H1 (cell line): ENCODE measurements at regions of chr11 and their contacts with region 1.

Region 1: DNA sequence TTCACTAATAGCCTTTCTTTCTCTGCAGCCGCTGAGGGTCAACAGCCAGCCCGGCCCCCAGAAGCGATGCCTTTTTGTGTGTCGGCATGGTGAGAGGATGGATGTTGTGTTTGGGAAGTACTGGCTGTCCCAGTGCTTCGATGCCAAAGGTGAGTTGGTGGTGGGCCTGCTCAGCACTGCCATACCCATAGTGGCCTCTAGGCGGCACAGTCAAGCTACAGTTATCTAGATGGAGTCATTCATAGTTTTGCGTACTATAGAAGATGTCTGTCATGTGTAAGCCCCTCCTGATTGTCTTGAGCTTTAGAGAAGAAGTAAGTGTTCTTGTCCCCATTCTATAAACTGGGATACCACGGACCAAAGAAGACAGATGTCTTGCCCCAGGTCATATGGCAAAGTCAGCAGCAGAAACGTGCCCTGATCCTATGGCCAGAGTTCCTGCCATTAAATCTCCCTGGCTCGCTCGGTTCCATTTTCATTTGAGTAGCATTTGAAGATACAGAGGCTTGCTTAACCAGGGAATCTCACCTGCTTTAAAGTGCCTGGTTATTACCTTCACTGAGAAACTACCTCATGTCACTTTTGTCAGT is 42.1 kb upstream of the CRTAM start:
- DNase-seq: peak in 1 of 2 experiments; percentile 92
- H3K4me3 ChIP-seq: no peak overlapping the region
- H3K27ac ChIP-seq: no peak overlapping the region
- H3K4me1 ChIP-seq: no peaks in the 10 kb centered on the region
- H3K27me3 ChIP-seq: no peaks in the 10 kb centered on the region
- CTCF ChIP-seq: peak; percentile 80 to 97 (median 89)
- EP300 ChIP-seq: no peak
- POLR2A ChIP-seq: no peak
- RAD21 ChIP-seq: peak; percentile 83 to 85

Region 2: GRCh38 chr11:122468965-122469364 is 327.3 kb before region 1 on chr11:
- CTCF ChIA-PET with region 1: no interaction called
- POLR2A ChIA-PET with region 1: no interaction called
- DNase-seq: no peak
- H3K4me3 ChIP-seq: no peak overlapping the region
- H3K27ac ChIP-seq: no peak overlapping the region
- H3K4me1 ChIP-seq: no peaks in the 10 kb centered on the region
- H3K27me3 ChIP-seq: no peaks in the 10 kb centered on the region
- CTCF ChIP-seq: no peak
- EP300 ChIP-seq: no peak
- POLR2A ChIP-seq: no peak
- RAD21 ChIP-seq: no peak

Region 3: DNA sequence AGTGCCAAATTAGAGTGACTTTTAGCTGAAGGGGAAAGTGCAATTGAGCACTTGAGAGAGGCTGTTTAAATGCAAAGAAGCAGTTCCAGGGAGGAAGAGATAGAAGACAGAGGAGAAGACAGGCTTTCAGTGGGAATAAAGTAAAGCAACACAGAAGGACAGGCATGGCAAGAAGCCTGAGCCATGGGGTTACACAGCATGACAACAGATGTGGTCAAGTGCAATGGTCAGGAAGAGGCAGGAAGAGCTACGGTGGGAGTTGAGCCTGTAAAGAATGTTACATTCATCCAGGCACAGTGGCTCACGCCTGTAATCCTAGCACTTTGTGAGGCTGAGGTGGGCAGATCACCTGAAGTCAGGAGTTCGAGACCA is 57.9 kb before region 1 on chr11:
- CTCF ChIA-PET with region 1: no interaction called
- POLR2A ChIA-PET with region 1: no interaction called
- DNase-seq: no peak
- H3K4me3 ChIP-seq: no peak overlapping the region
- H3K27ac ChIP-seq: no peak overlapping the region
- H3K4me1 ChIP-seq: 0 out of 7 replicates have a peak, but pooled peaks cover 0 to 4% (median 0%) of the 10 kb centered on the region in 4 experiments
- H3K27me3 ChIP-seq: no peaks in the 10 kb centered on the region
- CTCF ChIP-seq: no peak
- EP300 ChIP-seq: no peak
- POLR2A ChIP-seq: no peak
- RAD21 ChIP-seq: no peak

Region 4: DNA sequence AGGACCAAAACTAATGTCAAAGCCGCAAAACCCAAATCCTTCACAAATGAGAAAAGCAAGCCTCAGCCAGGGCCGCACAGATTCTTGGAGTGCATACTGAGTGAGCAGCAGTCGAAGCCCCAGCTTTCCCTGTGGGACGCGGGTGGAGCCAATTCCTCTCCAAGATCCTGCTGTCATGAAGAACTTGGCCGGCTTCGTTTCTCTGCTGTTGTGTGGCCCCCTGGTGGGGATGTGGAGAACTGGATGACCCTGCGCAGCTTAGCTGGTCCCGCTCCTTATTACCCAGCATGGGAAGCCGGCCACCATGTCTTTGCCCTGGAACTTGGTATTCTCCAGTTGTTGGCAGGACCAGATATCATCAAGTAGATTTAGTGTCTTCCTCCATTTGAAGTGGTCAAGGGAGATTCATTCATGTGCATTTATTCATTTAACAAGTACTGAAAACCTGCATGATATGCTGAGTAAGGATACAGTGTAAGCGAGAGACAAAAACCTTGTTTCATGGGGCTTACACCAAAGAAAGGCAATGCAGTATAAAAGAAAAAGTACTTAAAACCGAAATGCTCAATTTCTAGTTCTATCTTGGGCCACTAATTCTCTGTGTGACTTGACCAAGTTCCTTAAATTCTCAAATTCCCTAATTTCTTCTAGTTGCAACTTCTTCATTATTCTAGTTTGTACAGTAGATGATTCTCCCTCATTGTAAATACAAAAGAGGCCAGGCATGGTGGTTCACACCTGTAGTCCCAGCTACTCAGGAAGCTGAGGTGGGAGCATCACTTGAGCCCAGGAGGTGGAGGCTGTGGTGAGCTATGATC is 14.6 kb before region 1 on chr11:
- CTCF ChIA-PET with region 1: interaction called, 76 read pairs
- POLR2A ChIA-PET with region 1: interaction called, 3 read pairs
- DNase-seq: peak; percentile 77 to 95
- H3K4me3 ChIP-seq: no peak overlapping the region
- H3K27ac ChIP-seq: no peak overlapping the region
- H3K4me1 ChIP-seq: peaks cover 0 to 2% (median 0%) of the 10 kb centered on the region in 4 experiments; a peak in 4 of 7 replicates
- H3K27me3 ChIP-seq: no peaks in the 10 kb centered on the region
- CTCF ChIP-seq: peak; percentile 81 to 95 (median 93)
- EP300 ChIP-seq: no peak
- POLR2A ChIP-seq: no peak
- RAD21 ChIP-seq: peak; percentile 89 to 94

Region 5: DNA sequence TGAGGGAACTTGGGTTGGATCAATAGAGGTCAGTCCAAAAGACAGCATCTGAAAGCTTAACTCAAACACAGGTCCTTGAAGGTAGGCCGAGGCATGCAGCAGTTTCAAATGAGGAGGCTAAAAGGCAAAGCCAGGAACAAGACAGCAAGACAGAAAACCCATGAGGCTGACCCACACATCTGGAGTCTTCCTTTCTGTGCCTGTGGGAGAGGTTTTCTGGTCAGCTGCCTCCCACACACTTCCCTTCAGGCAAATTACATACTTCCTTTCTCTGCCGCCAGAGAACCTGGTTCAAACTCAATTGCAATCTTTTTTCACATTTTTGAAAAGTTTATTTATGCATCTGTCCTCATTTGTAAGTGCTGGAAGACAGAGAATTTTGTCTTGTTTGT is 12.3 kb after region 1 on chr11:
- CTCF ChIA-PET with region 1: interaction called, 56 read pairs
- POLR2A ChIA-PET with region 1: interaction called, 5 read pairs
- DNase-seq: no peak
- H3K4me3 ChIP-seq: no peak overlapping the region
- H3K27ac ChIP-seq: no peak overlapping the region; the same call in 1 of the 2 replicates
- H3K4me1 ChIP-seq: peaks cover 0 to 8% (median 4%) of the 10 kb centered on the region in 4 experiments
- H3K27me3 ChIP-seq: no peaks in the 10 kb centered on the region
- CTCF ChIP-seq: no peak
- EP300 ChIP-seq: no peak
- POLR2A ChIP-seq: no peak
- RAD21 ChIP-seq: no peak

Region 6: GRCh38 chr11:122814401-122814800 is 18.2 kb after region 1 on chr11:
- CTCF ChIA-PET with region 1: interaction called, 56 read pairs
- POLR2A ChIA-PET with region 1: interaction called, 5 read pairs
- DNase-seq: no peak
- H3K4me3 ChIP-seq: no peak overlapping the region
- H3K27ac ChIP-seq: no peak overlapping the region
- H3K4me1 ChIP-seq: peaks cover 0 to 10% (median 7%) of the 10 kb centered on the region in 4 experiments; a peak in 5 of 7 replicates
- H3K27me3 ChIP-seq: no peaks in the 10 kb centered on the region
- CTCF ChIP-seq: peak; percentile 30 to 47 (median 36)
- EP300 ChIP-seq: no peak
- POLR2A ChIP-seq: no peak
- RAD21 ChIP-seq: peak; percentile 42 to 59

Region 7: GRCh38 chr11:122832721-122833470 is 36.7 kb after region 1 on chr11:
- CTCF ChIA-PET with region 1: interaction called, 38 read pairs
- POLR2A ChIA-PET with region 1: no interaction called
- DNase-seq: no peak
- H3K4me3 ChIP-seq: no peak overlapping the region
- H3K27ac ChIP-seq: no peak overlapping the region
- H3K4me1 ChIP-seq: peaks cover 0 to 9% (median under 1%) of the 10 kb centered on the region in 4 experiments; a peak in 1 of 7 replicates
- H3K27me3 ChIP-seq: no peaks in the 10 kb centered on the region
- CTCF ChIP-seq: no peak
- EP300 ChIP-seq: no peak
- POLR2A ChIP-seq: no peak
- RAD21 ChIP-seq: no peak

Region 8: DNA sequence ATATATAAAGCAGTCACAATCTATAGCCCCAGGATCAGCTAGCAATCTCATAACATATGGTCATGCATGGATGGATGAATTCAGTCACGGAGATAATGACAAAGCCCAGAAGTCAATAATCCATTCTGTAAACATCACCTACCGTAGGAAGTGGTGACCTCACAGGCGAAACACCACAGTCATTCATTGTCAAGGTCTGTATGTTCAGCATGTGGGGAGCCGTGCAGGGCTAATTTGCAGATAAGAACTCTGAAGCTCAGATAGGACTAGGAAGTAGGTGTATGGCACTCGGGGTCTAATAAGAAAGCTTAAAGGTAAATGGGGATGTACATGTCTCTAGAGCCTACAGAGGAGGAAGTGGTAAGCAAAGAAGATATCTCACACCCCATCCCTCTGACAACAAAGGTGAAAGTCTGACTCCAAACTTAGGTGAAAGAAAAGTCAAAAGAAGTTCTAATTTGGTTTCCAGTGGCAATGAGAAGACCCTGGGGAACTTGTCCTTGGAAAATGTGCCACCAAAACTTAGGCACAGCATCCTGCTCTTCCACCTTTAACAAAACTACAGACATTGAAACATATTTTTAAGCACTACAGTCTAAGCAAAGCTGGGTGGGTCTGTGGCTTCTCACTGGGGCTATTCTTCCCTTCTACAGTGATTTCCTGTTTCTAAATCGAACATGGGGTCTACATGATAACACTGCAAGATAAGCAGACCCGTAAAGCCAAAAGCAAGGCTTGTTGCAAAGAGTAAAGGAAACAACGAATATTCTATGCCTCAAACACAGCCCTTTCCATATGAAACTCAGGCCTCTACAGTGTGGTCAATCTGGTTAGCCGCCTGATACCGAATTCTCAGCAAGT is 47.3 kb after region 1 on chr11:
- CTCF ChIA-PET with region 1: interaction called, 25 read pairs
- POLR2A ChIA-PET with region 1: no interaction called
- DNase-seq: no peak
- H3K4me3 ChIP-seq: no peak overlapping the region
- H3K27ac ChIP-seq: no peak overlapping the region
- H3K4me1 ChIP-seq: peaks cover 0 to under 1% (median 0%) of the 10 kb centered on the region in 4 experiments; a peak in 1 of 7 replicates
- H3K27me3 ChIP-seq: no peaks in the 10 kb centered on the region
- CTCF ChIP-seq: no peak
- EP300 ChIP-seq: no peak
- POLR2A ChIP-seq: no peak
- RAD21 ChIP-seq: no peak

Region 9: DNA sequence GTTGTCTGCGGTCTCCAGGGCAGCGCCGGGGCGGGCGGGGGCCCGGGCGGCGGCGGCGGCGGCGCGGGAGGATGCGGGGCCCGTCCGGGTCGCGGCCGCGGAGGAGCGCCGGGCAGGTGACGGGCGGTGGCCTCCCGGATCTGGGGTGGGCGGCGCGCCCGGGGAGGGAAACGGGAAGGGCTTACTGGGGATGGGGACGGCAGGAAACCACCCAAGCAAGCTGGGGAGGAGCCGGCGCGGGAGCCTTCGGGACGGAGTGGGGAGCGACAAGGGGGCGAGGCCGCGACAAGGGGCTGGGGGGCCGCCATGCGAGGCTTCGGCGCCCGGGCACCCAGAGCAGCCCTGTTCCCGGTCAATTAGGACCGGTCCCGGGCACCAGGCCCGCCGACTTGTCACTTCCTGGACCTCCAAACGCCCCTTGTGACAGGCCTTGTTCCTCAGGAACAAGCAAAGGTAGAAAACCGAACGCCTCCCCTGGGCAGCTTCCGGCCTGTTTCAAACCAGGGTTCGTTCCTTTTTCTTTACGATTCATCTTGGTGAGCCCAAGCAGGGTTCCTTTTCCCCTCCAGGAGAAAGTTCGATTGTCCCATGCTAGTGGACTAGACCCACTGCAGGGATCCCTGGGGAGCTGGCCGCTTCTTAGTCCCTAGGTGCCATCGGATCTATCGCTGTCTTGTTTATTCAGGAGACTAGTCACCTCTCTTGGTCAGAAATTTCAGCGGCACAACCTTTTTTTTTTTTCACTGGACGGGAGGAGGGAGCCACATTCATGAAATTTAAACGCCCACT is 86.8 kb after region 1 on chr11:
- CTCF ChIA-PET with region 1: interaction called, 13 read pairs
- POLR2A ChIA-PET with region 1: no interaction called
- DNase-seq: peak in 1 of 2 experiments; percentile 78
- H3K4me3 ChIP-seq: peak overlapping the region; percentile 66 to 81 (median 68)
- H3K27ac ChIP-seq: no peak overlapping the region
- H3K4me1 ChIP-seq: peaks cover 0 to 11% (median 5%) of the 10 kb centered on the region in 4 experiments; a peak in 5 of 7 replicates
- H3K27me3 ChIP-seq: peaks cover 0 to 13% (median 10%) of the 10 kb centered on the region in 4 experiments; a peak in 5 of 7 replicates
- CTCF ChIP-seq: no peak
- EP300 ChIP-seq: no peak
- POLR2A ChIP-seq: peak in 1 of 2 experiments; percentile 28; a peak in 1 of 3 replicates
- RAD21 ChIP-seq: no peak

Region 10: DNA sequence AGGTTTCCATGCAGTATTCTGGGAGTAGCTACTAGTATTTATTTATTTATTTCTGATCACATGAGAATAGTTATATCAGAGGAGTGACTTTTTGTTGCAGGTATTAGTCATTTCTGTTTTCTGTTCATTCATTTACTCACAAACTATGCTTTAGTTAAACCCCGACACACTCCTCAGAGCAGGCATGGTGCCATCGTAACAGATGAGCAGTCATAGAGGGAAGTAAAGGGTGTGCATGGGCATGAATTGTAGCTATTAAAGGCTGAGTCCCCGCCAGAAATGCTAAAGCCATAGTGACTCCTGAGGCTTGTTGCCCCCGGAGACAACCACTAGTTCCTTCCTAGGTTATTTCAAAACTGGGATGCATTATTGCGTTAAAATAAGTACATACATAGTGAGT is 96.9 kb after region 1 on chr11:
- CTCF ChIA-PET with region 1: no interaction called
- POLR2A ChIA-PET with region 1: no interaction called
- DNase-seq: no peak
- H3K4me3 ChIP-seq: no peak overlapping the region
- H3K27ac ChIP-seq: no peak overlapping the region
- H3K4me1 ChIP-seq: no peaks in the 10 kb centered on the region
- H3K27me3 ChIP-seq: no peaks in the 10 kb centered on the region
- CTCF ChIP-seq: no peak
- EP300 ChIP-seq: no peak
- POLR2A ChIP-seq: no peak
- RAD21 ChIP-seq: no peak